Ascending aorta (tissue), 2 donors: ENCODE measurements at regions of chr10 and their contacts with region 1.

Region 1: GRCh38 chr10:77236700-77237099 is 400.9 kb downstream of the KCNMA1 start:
- DNase-seq: no peak
- H3K4me3 ChIP-seq: no peak overlapping the region
- H3K27ac ChIP-seq: peak overlapping the region in 1 of 2 donors; percentile 78
- H3K4me1 ChIP-seq: peaks cover 8 to 58% of the 10 kb centered on the region in 2 donors
- H3K27me3 ChIP-seq: no peaks in the 10 kb centered on the region
- CTCF ChIP-seq: no peak

Region 2: DNA sequence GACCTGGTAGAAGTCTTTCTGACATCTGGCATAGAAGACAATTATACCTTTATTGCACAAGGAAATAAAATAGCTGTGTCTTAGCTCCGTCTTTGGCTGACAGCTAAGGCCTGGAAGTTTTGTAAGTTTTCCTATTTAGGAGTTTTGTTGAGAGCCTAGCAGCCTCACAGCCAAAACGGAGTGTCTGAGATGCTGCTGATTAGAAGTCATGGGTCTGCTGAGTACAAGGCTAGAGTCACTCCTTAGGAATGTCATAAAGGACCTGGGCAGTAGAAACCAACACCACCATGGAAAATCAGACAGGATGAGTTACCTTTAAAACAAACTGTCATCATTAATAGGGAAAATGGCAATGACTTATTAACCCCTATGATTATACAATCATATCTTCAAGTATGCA is 41.6 kb before region 1 on chr10:
- intact Hi-C with region 1: loop called (anchors 5 kb)
- DNase-seq: peak in 1 of 2 donors; percentile 81
- H3K4me3 ChIP-seq: no peak overlapping the region
- H3K27ac ChIP-seq: peak overlapping the region; percentile 67 to 82
- H3K4me1 ChIP-seq: peaks cover 9 to 20% of the 10 kb centered on the region in 2 donors
- H3K27me3 ChIP-seq: no peaks in the 10 kb centered on the region
- CTCF ChIP-seq: no peak